Activated naive CD4-positive, alpha-beta T cell treated with anti-CD3 and anti-CD28 coated beads for 36 hours (primary cell): ENCODE measurements at regions of chr4 and their contacts with region 1.

Region 1: DNA sequence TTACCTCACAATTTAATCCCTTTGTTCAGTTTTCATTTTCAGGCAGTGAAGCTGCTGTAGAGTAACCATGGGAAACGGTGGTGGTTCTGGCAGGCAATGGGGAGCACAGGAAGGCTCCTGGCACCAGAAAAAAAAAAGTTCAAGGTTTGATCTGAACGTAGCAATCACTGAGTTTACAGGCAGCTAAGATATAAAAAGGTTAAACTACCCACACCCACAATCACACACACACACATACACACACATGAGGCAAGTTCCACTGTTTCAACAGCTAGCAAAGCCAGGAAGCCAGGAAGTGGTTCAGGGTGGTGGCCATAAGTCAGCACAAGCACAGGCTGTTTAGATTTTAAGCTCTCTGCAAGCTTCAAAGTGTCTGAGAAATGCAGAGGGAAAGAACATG is at the start of gene SULT1B1:
- DNase-seq: peak; percentile 79
- H3K4me3 Mint-ChIP-seq: peak within 1 kb of the TSS; percentile 79
- H3K27ac Mint-ChIP-seq: peak within 1 kb of the TSS; percentile 98
- H3K4me1 Mint-ChIP-seq: peaks cover 56% of the 10 kb centered on the region
- H3K27me3 Mint-ChIP-seq: no peaks in the 10 kb centered on the region
- total RNA-seq, gene SULT1B1: 4.3 to 5.4 TPM

Region 2: GRCh38 chr4:68002906-68003305 is 1757.5 kb before region 1 on chr4:
- CTCF ChIA-PET with region 1: no interaction called
- intact Hi-C with region 1: no loop called
- DNase-seq: no peak
- H3K4me3 Mint-ChIP-seq: no peak overlapping the region
- H3K27ac Mint-ChIP-seq: no peak overlapping the region
- H3K4me1 Mint-ChIP-seq: no peaks in the 10 kb centered on the region
- H3K27me3 Mint-ChIP-seq: peaks cover 9% of the 10 kb centered on the region

Region 3: GRCh38 chr4:68349649-68350360 is 1410.7 kb before region 1 on chr4 and contains the start of gene YTHDC1:
- CTCF ChIA-PET with region 1: no interaction called
- intact Hi-C with region 1: loop called (anchors 10 kb)
- DNase-seq: peak; percentile 98
- H3K4me3 Mint-ChIP-seq: peak within 1 kb of the TSS; percentile 97
- H3K27ac Mint-ChIP-seq: peak within 1 kb of the TSS; percentile 99
- H3K4me1 Mint-ChIP-seq: peaks cover 29% of the 10 kb centered on the region
- H3K27me3 Mint-ChIP-seq: no peaks in the 10 kb centered on the region
- total RNA-seq, gene YTHDC1: 76.3 to 81.0 TPM

Region 4: DNA sequence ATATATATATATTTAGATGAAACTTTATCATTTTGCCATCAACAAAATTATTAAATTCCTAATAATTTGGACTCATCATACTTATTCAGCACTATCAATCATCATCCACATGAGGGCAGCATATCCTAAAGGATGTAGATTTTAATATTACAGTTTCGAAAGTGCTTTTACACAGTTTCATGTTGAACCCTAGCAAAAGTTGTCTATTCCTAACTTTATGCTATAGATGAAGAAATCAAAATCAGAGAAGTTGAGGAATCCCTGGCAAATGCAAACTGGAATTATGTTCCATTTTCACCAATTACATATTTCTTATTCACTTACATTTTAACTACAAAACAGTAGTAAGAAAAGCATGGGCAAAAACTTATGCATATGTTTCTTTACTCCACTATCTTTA is 70.9 kb before region 1 on chr4:
- CTCF ChIA-PET with region 1: interaction called, 3 read pairs
- intact Hi-C with region 1: loop called (anchors 2 kb)
- DNase-seq: no peak
- H3K4me3 Mint-ChIP-seq: no peak overlapping the region
- H3K27ac Mint-ChIP-seq: no peak overlapping the region
- H3K4me1 Mint-ChIP-seq: peaks cover 3% of the 10 kb centered on the region
- H3K27me3 Mint-ChIP-seq: no peaks in the 10 kb centered on the region

Region 5: DNA sequence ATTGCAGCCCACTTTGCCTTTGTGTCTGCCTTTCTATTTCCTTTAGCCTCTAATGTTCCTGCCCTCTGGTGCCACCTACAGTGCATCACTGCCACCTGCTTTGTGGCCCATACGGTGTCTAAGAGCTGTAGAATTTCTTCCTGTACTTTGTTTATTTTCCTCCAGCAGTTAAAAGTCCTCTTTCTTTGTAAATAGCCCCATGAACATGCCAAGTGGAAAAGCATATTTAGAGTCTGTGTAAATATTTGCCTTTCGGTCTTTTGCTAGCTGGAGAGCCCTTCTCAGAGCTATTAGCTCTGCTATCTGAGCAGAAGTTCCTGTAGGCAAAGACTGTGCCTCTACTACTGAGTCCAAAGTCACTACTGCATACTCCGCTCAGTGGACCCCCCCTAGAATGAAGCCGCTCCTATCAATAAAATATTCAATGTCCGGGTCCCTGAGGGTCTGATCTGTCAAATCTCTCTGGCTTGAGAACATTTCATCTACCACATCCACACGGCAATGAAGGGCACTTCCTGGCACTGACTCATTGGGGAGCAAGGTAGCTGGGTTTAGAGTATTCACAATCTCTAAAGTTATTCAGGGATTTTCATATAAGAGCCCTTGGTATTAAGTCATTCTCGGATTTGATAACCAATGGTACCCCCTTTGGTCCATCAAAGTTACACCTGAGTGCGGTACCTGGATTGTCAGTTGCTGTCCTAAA is 63.2 kb after region 1 on chr4:
- CTCF ChIA-PET with region 1: interaction called, 8 read pairs
- intact Hi-C with region 1: loop called (anchors 1 kb)
- DNase-seq: peak; percentile 78
- H3K4me3 Mint-ChIP-seq: no peak overlapping the region
- H3K27ac Mint-ChIP-seq: no peak overlapping the region
- H3K4me1 Mint-ChIP-seq: peaks cover 6% of the 10 kb centered on the region
- H3K27me3 Mint-ChIP-seq: no peaks in the 10 kb centered on the region

Region 6: DNA sequence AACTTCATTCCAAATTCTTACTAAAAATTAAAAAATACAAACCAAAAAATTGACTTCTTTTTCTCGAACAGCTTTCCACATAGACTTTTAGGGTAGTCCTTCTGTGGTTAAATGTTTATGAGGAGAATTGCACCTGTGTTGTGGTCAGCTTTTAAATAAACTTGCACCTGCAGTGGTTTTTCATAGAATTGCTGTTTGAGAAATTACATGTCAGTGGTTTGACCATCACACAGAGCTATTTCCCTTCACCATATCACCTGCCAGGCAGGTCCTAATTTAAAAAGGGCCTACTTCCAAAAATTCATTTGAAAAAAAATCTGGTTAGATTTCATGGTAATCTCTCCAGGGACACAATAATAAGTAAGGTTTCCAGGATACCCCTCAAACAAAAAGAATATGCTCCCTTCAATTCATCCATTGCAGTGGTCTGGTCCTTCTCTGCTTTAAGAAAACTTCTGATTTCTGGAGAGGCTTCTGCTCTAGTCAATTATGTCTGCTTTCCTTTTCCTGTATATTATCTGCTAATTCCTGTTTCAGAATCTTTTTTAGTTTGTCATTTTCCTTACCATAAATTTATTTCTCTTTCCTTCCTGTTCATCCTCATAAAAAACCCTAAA is 918.0 kb after region 1 on chr4:
- CTCF ChIA-PET with region 1: no interaction called
- intact Hi-C with region 1: no loop called
- DNase-seq: no peak
- H3K4me3 Mint-ChIP-seq: no peak overlapping the region
- H3K27ac Mint-ChIP-seq: no peak overlapping the region
- H3K4me1 Mint-ChIP-seq: peaks cover 9% of the 10 kb centered on the region
- H3K27me3 Mint-ChIP-seq: peaks cover 2% of the 10 kb centered on the region

Region 7: GRCh38 chr4:70704331-70705145 is 944.1 kb after region 1 on chr4:
- CTCF ChIA-PET with region 1: no interaction called
- intact Hi-C with region 1: loop called (anchors 5 kb)
- DNase-seq: peak; percentile 69
- H3K4me3 Mint-ChIP-seq: peak overlapping the region; percentile 81
- H3K27ac Mint-ChIP-seq: peak overlapping the region; percentile 85
- H3K4me1 Mint-ChIP-seq: peaks cover 27% of the 10 kb centered on the region
- H3K27me3 Mint-ChIP-seq: no peaks in the 10 kb centered on the region

Region 8: GRCh38 chr4:71009890-71010588 is 1249.6 kb after region 1 on chr4:
- CTCF ChIA-PET with region 1: no interaction called
- intact Hi-C with region 1: loop called (anchors 5 kb)
- DNase-seq: no peak
- H3K4me3 Mint-ChIP-seq: no peak overlapping the region
- H3K27ac Mint-ChIP-seq: no peak overlapping the region
- H3K4me1 Mint-ChIP-seq: peaks cover 34% of the 10 kb centered on the region
- H3K27me3 Mint-ChIP-seq: no peaks in the 10 kb centered on the region